HepG2 (cell line): ENCODE measurements at regions of chr2 and their contacts with region 1.

Region 1: DNA sequence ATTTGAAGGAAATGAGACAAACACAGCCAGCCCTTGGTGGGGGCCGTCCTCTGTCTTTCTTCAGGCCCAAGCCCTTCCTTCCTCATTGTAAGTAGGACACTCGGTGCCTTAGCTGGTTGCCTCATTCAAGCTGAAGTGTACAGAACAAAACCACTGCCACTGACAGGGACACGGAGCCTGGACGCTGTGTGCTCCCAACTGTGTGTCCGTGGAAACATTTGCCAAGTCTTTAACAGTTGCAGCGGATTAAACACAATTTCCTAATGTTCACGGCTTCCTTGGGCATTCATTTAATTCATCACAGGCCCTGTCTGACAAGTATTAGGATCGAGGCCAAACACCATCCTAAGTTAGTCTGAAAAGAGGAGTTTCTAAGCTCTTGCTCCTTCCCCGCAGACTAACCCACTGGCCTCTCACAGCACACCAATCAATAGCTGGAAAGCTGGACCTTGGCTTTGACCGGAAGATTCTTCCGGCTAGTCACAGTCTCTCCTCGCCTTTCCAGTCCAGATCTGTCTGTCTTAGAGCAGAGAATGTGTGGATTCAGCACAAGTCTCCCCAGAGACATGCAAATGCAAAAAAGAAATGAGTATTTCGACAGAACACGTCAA is 68.7 kb upstream of the ACSL3 start:
- DNase-seq: no peak
- ATAC-seq: no peak
- H3K4me3 ChIP-seq: no peak overlapping the region
- H3K27ac ChIP-seq: no peak overlapping the region
- H3K4me1 ChIP-seq: peaks cover 70% of the 10 kb centered on the region
- H3K27me3 ChIP-seq: no peaks in the 10 kb centered on the region
- CTCF ChIP-seq: no peak
- EP300 ChIP-seq: 0 out of 4 replicates have a peak, but pooled peaks of 1 of the 2 experiments have one; percentile 7
- POLR2A ChIP-seq: no peak
- RAD21 ChIP-seq: no peak

Region 2: DNA sequence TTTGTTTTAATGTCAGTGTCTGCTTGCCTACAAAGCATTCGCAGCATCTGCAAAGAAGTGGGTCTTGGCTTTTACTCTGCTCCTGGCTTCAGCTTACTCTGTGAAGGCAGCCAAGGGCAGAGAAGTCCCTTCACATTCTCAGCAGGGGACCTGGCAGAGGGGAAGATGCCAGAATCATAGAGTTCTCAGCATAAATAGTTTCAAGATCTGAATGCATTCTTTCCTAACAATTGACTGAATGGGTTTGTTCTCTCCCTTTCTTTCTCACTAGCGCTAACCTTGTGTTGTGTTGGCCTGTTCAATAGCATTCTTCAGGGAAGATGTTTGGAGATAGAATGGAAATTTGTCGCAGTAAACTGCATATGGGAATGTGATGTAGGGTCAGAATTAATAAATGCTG is 243.1 kb before region 1 on chr2:
- CTCF ChIA-PET with region 1: no interaction called
- POLR2A ChIA-PET with region 1: no interaction called
- in situ Hi-C with region 1: no loop called
- intact Hi-C with region 1: no loop called
- DNase-seq: no peak
- ATAC-seq: no peak; the same call in 2 of the 3 replicates
- H3K4me3 ChIP-seq: no peak overlapping the region
- H3K27ac ChIP-seq: no peak overlapping the region
- H3K4me1 ChIP-seq: peaks cover 6% of the 10 kb centered on the region; the same call in 1 of the 2 replicates
- H3K27me3 ChIP-seq: peaks cover under 1 to 8% of the 10 kb centered on the region in 2 experiments; a peak in 2 of 5 replicates
- CTCF ChIP-seq: no peak
- EP300 ChIP-seq: no peak
- POLR2A ChIP-seq: no peak
- RAD21 ChIP-seq: no peak

Region 3: DNA sequence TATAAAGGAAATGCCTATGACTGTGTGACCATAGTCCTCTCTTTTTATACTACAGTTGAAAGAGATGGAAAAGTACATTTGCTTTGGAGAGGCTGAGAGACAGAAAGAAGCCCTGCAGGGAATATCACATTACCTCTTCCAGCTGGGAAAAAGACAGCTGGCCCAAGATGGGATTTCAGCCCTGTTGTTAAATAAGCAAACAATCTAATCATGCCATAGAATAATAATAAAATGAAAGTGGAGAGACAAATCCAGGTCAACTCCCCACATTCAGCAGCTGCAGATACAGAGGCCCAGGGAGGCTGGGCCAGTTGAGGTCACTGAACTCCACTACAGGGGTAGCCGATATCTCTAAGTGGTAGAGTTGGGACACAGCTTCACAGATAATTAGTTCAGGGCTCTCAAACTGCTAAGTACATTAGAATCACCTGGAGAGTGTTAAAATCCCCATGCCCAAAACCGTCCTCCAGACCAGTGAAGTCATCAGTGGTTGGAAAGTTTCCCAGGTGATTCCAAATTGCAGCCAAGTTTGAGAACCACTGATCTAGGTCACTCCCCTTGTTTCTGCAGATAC is 38.8 kb before region 1 on chr2:
- CTCF ChIA-PET with region 1: no interaction called
- POLR2A ChIA-PET with region 1: interaction called, 4 read pairs
- in situ Hi-C with region 1: no loop called
- intact Hi-C with region 1: loop called (anchors 5 kb)
- DNase-seq: no peak
- ATAC-seq: peak; percentile 77
- H3K4me3 ChIP-seq: peak overlapping the region in 2 of 3 experiments; percentile 8 to 20; a peak in 2 of 6 replicates
- H3K27ac ChIP-seq: peak overlapping the region; percentile 16
- H3K4me1 ChIP-seq: peaks cover 61% of the 10 kb centered on the region
- H3K27me3 ChIP-seq: no peaks in the 10 kb centered on the region
- CTCF ChIP-seq: no peak
- EP300 ChIP-seq: no peak; a peak in 1 of 4 replicates
- POLR2A ChIP-seq: no peak
- RAD21 ChIP-seq: no peak